ENCODE measurements at regions of chr7 and their contacts with region 1.

Region 1: DNA sequence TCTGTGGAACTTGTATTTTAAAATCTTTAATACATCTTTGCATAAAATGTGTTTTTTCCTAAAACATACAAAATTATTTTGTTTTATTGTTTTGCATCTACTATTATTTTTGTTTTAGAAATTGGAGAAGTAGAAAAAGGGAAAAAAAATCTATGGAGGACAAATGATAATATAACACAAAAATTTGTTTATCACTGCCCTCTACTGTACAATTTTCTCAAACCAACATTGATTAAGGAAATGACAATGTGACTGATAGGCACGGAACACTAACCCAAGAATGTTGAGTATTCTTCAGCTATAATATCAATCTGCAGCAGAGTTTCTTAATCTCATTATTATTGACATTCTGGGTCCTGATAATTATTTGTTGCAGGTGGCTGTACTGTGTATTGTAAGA is 9.5 kb upstream of the ING3 start:
- DNase-seq: no peak
- H3K4me3 ChIP-seq: no peak overlapping the region
- H3K27ac ChIP-seq: no peak overlapping the region
- H3K4me1 ChIP-seq: no peaks in the 10 kb centered on the region
- H3K27me3 ChIP-seq: no peaks in the 10 kb centered on the region
- CTCF ChIP-seq: no peak
- POLR2A ChIP-seq: no peak

Region 2: GRCh38 chr7:120805636-120806388 is 135.3 kb before region 1 on chr7:
- intact Hi-C with region 1: loop called (anchors 10 kb)
- DNase-seq: no peak
- H3K4me3 ChIP-seq: no peak overlapping the region
- H3K27ac ChIP-seq: no peak overlapping the region
- H3K4me1 ChIP-seq: no peaks in the 10 kb centered on the region
- H3K27me3 ChIP-seq: no peaks in the 10 kb centered on the region
- CTCF ChIP-seq: peak; percentile 50 to 73 (median 63)
- POLR2A ChIP-seq: no peak

Region 3: DNA sequence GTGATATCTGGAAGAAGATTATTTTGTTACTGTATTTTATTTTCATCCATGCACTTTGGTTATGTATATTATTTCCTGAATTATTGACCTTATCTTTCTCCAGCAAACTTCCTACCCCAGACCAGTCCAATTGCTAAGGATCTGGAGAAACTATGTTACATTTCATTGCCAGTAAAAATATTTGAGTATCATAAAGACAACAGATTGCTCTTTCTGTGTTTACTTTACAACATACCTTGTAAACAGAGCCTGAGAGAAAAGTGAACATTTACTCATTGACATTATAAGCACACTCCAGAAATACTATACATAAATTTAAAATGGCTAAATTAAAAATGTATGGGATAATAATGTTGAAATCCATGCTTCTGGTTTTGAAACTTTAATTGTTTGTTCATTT is 641.2 kb after region 1 on chr7:
- intact Hi-C with region 1: no loop called
- DNase-seq: no peak
- H3K4me3 ChIP-seq: no peak overlapping the region
- H3K27ac ChIP-seq: no peak overlapping the region
- H3K4me1 ChIP-seq: no peaks in the 10 kb centered on the region
- H3K27me3 ChIP-seq: no peaks in the 10 kb centered on the region
- CTCF ChIP-seq: no peak
- POLR2A ChIP-seq: no peak